ENCODE measurements at regions of chr1 and their contacts with region 1.

Region 1: DNA sequence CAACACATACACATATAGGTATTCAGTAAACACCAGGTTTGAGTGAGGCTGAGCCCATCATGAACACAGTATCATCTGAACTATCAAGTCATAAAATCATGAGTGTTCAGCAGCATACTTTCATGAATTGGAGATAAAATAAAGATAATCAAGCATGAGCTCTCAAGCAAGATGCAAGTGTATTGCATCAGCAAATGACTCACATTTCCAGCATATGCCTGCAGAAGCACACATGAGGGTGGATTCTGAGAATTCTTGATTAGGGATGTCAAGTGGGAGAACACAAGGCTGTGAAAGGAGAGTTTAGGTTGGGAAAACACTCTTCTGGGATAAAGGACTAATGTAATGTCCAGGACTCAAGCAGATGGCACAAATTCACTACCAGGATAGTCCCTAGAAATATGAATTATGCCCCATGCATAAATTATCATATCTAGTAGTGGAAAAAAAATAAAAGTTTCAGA is 299.2 kb downstream of the SRGAP2C start:
- DNase-seq: no peak
- ATAC-seq: no peak
- H3K4me3 ChIP-seq: no peak overlapping the region
- H3K4me3 Mint-ChIP-seq: no peak overlapping the region
- H3K27ac ChIP-seq: no peak overlapping the region
- H3K27ac Mint-ChIP-seq: no peak overlapping the region
- H3K4me1 ChIP-seq: no peaks in the 10 kb centered on the region
- H3K4me1 Mint-ChIP-seq: peaks cover 8 to 15% (median 12%) of the 10 kb centered on the region in 3 donors
- H3K27me3 ChIP-seq: no peaks in the 10 kb centered on the region
- H3K27me3 Mint-ChIP-seq: no peaks in the 10 kb centered on the region

Region 2: GRCh38 chr1:121418369-121419049 is 65.5 kb before region 1 on chr1:
- CTCF ChIA-PET with region 1: no interaction called
- POLR2A ChIA-PET with region 1: no interaction called
- DNase-seq: no peak
- ATAC-seq: no peak
- H3K4me3 ChIP-seq: no peak overlapping the region
- H3K4me3 Mint-ChIP-seq: no peak overlapping the region
- H3K27ac ChIP-seq: no peak overlapping the region
- H3K27ac Mint-ChIP-seq: no peak overlapping the region
- H3K4me1 ChIP-seq: peaks cover 0 to 3% of the 10 kb centered on the region in 2 experiments
- H3K4me1 Mint-ChIP-seq: peaks cover 0 to 9% (median 4%) of the 10 kb centered on the region in 3 donors
- H3K27me3 ChIP-seq: no peaks in the 10 kb centered on the region
- H3K27me3 Mint-ChIP-seq: peaks cover 6 to 8% of the 10 kb centered on the region in 2 donors

Region 3: GRCh38 chr1:121471523-121471922 is 12.5 kb before region 1 on chr1:
- CTCF ChIA-PET with region 1: no interaction called
- POLR2A ChIA-PET with region 1: no interaction called
- DNase-seq: no peak
- ATAC-seq: no peak
- H3K4me3 ChIP-seq: no peak overlapping the region
- H3K4me3 Mint-ChIP-seq: no peak overlapping the region
- H3K27ac ChIP-seq: no peak overlapping the region
- H3K27ac Mint-ChIP-seq: no peak overlapping the region
- H3K4me1 ChIP-seq: no peaks in the 10 kb centered on the region
- H3K4me1 Mint-ChIP-seq: peaks cover 0 to 15% (median 4%) of the 10 kb centered on the region in 3 donors
- H3K27me3 ChIP-seq: no peaks in the 10 kb centered on the region
- H3K27me3 Mint-ChIP-seq: no peaks in the 10 kb centered on the region

Region 4: DNA sequence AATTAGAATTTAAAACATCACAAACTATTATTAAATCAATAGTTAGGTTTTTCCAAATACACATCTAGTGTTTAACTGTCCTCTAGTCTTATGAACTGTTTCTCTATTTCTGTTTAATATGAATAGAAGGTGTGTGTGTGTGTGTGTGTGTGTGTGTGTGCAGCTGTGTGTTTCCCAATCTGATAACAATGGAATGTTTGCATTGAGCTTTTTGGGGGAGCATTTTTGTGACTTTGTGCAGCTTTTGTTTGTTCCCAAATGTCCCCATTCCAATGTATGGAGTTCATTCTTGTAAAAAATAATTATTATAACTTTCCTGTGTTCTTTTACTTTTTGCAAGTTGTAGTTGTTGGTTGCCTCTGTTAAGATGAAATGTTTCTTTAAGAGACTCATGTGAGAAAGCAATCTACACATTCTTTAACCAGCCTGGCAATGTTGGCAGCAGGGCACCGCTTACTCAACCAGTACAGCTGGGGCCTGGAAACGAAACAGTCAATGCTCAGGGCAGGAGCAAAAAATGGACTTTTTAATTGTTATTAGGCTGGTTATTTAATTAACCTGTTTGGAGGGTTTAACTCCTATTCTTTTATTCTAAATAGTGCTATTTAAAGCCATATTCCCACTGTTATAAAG is 55.1 kb after region 1 on chr1:
- CTCF ChIA-PET with region 1: no interaction called
- POLR2A ChIA-PET with region 1: interaction called in 1 of 2 experiments, 13 read pairs
- DNase-seq: no peak
- ATAC-seq: no peak
- H3K4me3 ChIP-seq: no peak overlapping the region
- H3K4me3 Mint-ChIP-seq: no peak overlapping the region
- H3K27ac ChIP-seq: no peak overlapping the region
- H3K27ac Mint-ChIP-seq: no peak overlapping the region
- H3K4me1 ChIP-seq: no peaks in the 10 kb centered on the region
- H3K4me1 Mint-ChIP-seq: peaks cover 5 to 7% (median 5%) of the 10 kb centered on the region in 3 donors
- H3K27me3 ChIP-seq: no peaks in the 10 kb centered on the region
- H3K27me3 Mint-ChIP-seq: no peaks in the 10 kb centered on the region